WTC11 (cell line): ENCODE measurements at regions of chr1 and their contacts with region 1.

Region 1: DNA sequence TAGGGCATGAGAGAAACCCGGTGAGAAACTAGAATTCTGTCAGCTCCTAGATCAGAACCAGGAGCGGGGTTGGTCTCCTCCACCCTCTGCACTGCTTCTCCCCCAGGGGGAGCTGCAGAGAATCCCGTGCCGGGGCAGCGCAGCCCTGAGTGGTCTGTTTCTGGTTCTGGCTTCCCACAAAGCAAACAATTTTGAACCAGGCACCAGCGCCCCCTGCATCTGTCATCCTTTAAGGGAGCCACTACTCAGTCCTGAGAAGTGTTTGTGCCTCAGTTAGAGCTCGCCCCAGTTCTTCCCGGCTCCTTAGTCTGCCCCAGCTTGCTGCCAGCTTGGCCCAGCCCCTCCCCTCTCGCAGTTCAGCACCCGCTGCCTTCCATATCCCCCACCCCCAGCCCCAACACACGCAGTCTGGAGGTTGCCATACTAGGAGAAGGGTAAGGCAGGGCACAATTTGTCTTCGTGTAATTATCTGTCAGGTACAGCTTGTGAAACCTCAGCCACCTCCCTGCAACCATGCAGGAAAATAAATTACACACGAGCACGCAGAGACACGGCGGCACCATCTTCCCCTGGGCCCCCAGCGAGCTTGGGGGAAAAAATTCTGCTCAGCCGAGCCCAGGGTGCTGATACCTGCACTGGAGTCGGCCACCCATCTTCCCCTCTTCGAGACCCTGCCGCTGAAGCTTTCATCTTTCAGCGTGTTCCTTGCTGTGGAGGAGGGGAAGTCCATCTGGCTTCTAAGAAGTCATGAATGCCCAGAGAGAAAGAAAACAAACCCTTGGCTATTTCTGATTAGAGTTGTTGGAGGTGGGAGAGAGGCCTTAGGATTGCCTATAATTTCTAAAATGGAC is 62.6 kb upstream of the CD1D start:
- DNase-seq: peak; percentile 87
- ATAC-seq: peak; percentile 81
- H3K4me3 Mint-ChIP-seq: peak overlapping the region; percentile 51
- H3K27ac Mint-ChIP-seq: no peak overlapping the region; the same call in none of the 2 replicates
- H3K4me1 Mint-ChIP-seq: peaks cover 61% of the 10 kb centered on the region
- H3K27me3 Mint-ChIP-seq: peaks cover 23% of the 10 kb centered on the region
- CTCF ChIP-seq: no peak; the same call in 1 of the 2 replicates

Region 2: DNA sequence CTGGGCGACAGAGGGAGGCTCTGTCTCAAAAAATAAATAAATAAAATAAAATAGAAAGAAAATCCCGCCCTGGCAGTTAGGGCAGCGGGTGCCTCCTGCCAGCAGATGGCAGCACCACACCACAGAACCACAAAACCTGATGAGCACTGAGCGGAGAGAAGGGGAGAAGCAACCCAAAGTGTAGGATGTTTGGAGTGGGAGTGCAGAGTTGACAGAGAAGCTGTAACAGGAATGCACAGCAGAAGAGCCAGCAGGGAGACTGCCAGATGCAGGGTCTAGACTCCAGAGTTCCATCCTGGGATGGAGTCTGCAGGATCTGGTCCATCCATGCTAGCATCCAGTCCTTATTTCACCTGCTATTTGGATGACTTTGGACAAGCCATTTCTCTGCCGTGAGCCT is 154.4 kb before region 1 on chr1:
- CTCF ChIA-PET with region 1: interaction called, 820 read pairs
- POLR2A ChIA-PET with region 1: interaction called, 3 read pairs
- DNase-seq: peak; percentile 79
- ATAC-seq: peak; percentile 90
- H3K4me3 Mint-ChIP-seq: no peak overlapping the region
- H3K27ac Mint-ChIP-seq: no peak overlapping the region
- H3K4me1 Mint-ChIP-seq: peaks cover 14% of the 10 kb centered on the region
- H3K27me3 Mint-ChIP-seq: peaks cover 3% of the 10 kb centered on the region; the same call in 1 of the 2 replicates
- CTCF ChIP-seq: peak; percentile 89

Region 3: DNA sequence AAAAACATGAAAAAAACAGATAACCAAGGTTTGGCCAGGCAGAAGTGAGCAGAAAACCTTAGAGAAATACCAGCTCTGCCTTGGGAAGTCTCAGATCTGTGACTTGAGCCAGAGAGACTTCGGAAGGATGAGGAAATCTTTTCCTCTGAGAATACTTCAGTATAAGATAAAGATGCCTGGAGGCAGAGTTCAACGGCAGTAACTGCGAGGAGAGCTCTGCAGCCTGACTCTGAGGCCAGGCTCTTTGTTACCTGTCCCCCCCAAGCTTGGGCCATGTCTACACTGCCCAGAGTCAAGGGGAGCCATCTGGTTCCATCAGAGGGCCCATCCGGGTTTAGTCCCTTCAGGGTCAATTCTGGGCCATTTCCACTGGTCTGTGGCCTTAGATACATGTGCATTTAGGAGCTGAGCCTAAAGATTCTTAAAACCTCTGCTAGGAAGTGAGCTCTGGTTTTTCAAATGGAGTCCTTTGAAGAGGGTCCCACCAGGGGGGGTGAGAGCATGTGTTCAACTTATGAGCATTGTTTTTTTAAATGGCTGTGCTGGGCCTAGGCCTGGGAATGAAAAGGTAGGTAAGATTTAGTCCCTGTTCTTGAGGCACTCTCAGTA is 116.0 kb before region 1 on chr1:
- CTCF ChIA-PET with region 1: interaction called, 475 read pairs
- POLR2A ChIA-PET with region 1: interaction called, 4 read pairs
- DNase-seq: no peak
- ATAC-seq: peak; percentile 34
- H3K4me3 Mint-ChIP-seq: no peak overlapping the region
- H3K27ac Mint-ChIP-seq: peak overlapping the region; percentile 82
- H3K4me1 Mint-ChIP-seq: peaks cover 84% of the 10 kb centered on the region
- H3K27me3 Mint-ChIP-seq: no peaks in the 10 kb centered on the region
- CTCF ChIP-seq: no peak

Region 4: DNA sequence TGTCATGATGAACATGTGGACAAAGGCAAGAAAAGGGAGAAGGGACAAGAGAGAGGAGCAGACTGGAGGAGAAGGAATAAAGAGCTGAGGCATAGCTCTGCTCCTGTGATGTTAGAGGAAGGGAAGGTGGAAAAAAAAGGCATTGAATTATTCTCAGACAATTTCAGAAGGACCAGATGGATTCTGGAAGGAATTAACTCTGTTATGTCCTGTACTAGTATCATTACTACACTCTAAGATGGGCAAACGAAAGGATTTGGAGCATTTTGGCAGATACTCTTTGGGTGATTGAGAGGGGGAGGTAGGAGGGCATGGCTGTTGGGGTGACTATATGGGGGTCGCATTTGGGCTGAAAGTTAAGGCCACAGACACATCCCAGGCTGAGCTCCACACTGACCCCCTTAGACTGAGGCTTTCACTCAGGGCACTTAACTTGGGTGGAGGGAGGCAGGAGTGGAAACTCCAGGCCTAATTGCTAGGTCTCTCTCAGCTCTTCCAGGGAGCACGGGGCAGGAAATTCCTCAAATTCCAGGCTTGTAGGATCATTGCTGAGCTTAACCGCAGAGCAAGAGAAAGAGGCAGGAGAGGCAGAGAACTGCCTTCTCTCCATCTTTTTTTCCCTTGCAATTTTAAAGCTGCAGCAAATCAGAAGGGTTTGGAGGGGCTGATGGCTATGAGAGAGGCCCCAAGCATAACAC is 98.8 kb before region 1 on chr1:
- CTCF ChIA-PET with region 1: interaction called, 14 read pairs
- POLR2A ChIA-PET with region 1: no interaction called
- DNase-seq: peak; percentile 64
- ATAC-seq: peak; percentile 87
- H3K4me3 Mint-ChIP-seq: peak overlapping the region; percentile 37
- H3K27ac Mint-ChIP-seq: peak overlapping the region; percentile 91
- H3K4me1 Mint-ChIP-seq: peaks cover 95% of the 10 kb centered on the region
- H3K27me3 Mint-ChIP-seq: no peaks in the 10 kb centered on the region
- CTCF ChIP-seq: no peak

Region 5: DNA sequence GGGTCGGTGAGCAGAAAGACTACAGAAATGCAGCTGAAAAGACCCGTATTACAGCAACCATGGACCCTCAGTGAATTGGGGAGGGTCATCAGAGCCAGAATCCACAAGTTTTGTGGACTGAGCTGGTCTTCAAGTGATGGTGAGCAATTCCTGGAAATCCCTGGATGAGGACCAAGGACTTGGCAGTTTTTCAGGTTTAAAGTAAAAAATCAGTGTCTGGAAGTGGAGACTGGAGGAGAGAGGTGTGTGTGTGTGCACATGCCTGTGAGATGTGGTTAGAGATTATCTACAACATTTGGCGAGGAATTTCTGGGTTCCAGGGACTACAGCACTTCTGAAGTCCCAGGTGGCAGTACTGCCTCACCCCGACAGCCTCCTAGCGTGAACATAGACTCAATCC is 68.2 kb before region 1 on chr1:
- CTCF ChIA-PET with region 1: interaction called, 14 read pairs
- POLR2A ChIA-PET with region 1: no interaction called
- DNase-seq: no peak
- ATAC-seq: no peak
- H3K4me3 Mint-ChIP-seq: no peak overlapping the region
- H3K27ac Mint-ChIP-seq: no peak overlapping the region
- H3K4me1 Mint-ChIP-seq: peaks cover 40% of the 10 kb centered on the region
- H3K27me3 Mint-ChIP-seq: no peaks in the 10 kb centered on the region
- CTCF ChIP-seq: no peak

Region 6: DNA sequence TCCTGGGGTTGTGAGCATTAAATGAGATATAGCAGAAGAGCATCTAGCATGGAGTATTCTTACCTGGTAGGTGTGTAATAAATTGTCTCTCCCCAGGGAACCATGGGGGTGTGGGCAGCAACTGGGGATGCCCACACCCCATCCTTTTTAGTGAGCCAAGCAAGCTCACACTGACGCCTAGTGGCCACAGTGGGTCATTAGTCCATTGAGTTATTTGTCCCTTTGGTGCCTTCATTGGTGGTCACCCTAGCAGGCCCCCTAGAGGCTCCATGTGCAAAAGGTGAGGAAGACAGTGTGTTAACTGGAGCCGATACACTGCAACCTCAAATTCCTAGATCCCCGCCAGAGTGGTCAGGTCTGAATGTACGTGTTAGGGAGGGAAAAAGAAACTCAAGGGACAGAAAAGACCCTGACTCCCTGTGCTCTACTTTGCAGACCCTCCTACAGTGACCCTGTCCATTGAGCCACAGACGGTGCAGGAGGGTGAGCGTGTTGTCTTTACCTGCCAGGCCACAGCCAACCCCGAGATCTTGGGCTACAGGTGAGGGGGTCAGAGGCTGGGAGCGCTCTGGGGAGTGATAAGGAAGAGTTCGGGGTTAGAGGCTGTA is 30.7 kb before region 1 on chr1:
- CTCF ChIA-PET with region 1: interaction called, 443 read pairs
- POLR2A ChIA-PET with region 1: no interaction called
- DNase-seq: peak; percentile 87
- ATAC-seq: peak; percentile 97
- H3K4me3 Mint-ChIP-seq: no peak overlapping the region
- H3K27ac Mint-ChIP-seq: peak overlapping the region; percentile 69
- H3K4me1 Mint-ChIP-seq: peaks cover 8% of the 10 kb centered on the region
- H3K27me3 Mint-ChIP-seq: no peaks in the 10 kb centered on the region
- CTCF ChIP-seq: peak; percentile 94

Region 7: GRCh38 chr1:158163000-158163947 is 45.2 kb after region 1 on chr1:
- CTCF ChIA-PET with region 1: no interaction called
- POLR2A ChIA-PET with region 1: no interaction called
- DNase-seq: no peak
- ATAC-seq: no peak
- H3K4me3 Mint-ChIP-seq: no peak overlapping the region
- H3K27ac Mint-ChIP-seq: no peak overlapping the region
- H3K4me1 Mint-ChIP-seq: no peaks in the 10 kb centered on the region; the same call in 1 of the 2 replicates
- H3K27me3 Mint-ChIP-seq: peaks cover 22% of the 10 kb centered on the region
- CTCF ChIP-seq: no peak

Region 8: DNA sequence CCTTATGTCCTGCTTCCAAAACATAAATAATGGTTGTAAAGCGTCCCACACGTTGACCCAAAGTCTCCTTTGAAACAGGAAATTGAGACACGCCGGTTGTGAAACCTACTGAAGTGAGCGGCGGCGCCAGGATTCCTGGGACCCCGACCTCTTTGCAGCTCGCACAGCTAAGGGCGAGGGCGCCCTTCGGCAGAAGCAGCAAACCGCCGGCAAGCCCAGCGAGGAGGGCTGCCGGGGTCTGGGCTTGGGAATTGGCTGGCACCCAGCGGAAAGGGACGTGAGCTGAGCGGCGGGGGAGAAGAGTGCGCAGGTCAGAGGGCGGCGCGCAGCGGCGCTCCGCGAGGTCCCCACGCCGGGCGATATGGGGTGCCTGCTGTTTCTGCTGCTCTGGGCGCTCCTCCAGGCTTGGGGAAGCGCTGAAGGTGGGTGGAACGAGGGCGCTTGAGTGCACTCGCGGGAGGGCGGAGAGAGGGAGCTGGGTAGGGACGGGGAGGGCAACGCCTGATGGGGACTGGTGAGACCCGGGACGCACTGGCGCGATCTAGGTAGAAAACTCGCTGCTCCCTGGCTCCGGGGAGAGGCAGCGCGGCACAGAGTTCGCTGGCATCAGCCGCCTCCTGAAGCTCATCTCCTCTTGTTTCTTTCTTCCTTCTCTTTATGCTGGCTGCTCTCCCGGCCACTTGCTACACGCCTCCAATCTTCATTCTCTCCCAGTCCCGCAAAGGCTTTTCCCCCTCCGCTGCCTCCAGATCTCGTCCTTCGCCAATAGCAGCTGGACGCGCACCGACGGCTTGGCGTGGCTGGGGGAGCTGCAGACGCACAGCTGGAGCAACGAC is 62.9 kb after region 1 on chr1 and contains the start of gene CD1D:
- CTCF ChIA-PET with region 1: interaction called, 14 read pairs
- POLR2A ChIA-PET with region 1: no interaction called
- DNase-seq: peak; percentile 64
- ATAC-seq: peak; percentile 55
- H3K4me3 Mint-ChIP-seq: peak within 1 kb of the TSS; percentile 92
- H3K27ac Mint-ChIP-seq: no peak within 1 kb of the TSS
- H3K4me1 Mint-ChIP-seq: peaks cover 45% of the 10 kb centered on the region
- H3K27me3 Mint-ChIP-seq: peaks cover 90% of the 10 kb centered on the region
- CTCF ChIP-seq: no peak
- total RNA-seq, gene CD1D: 3.8 to 4.7 TPM (median 3.9 TPM) in 3 replicates

Region 9: GRCh38 chr1:158203693-158204457 is 85.8 kb after region 1 on chr1:
- CTCF ChIA-PET with region 1: no interaction called
- POLR2A ChIA-PET with region 1: no interaction called
- DNase-seq: no peak
- ATAC-seq: peak; percentile 82
- H3K4me3 Mint-ChIP-seq: peak overlapping the region; percentile 51
- H3K27ac Mint-ChIP-seq: no peak overlapping the region
- H3K4me1 Mint-ChIP-seq: peaks cover 18% of the 10 kb centered on the region
- H3K27me3 Mint-ChIP-seq: no peaks in the 10 kb centered on the region
- CTCF ChIP-seq: peak; percentile 65